Heart left ventricle (tissue), 16 donors: ENCODE measurements at regions of chr17 and their contacts with region 1.

Region 1: GRCh38 chr17:49646391-49647255 is 31.3 kb downstream of the SPOP start:
- DNase-seq: no peak
- ATAC-seq: peak; percentile 48 to 77 (median 62)
- H3K4me3 ChIP-seq: no peak overlapping the region
- H3K27ac ChIP-seq: peak overlapping the region; percentile 50 to 91 (median 73)
- H3K4me1 ChIP-seq: peaks cover 0 to 73% (median 45%) of the 10 kb centered on the region in 12 donors
- H3K27me3 ChIP-seq: no peaks in the 10 kb centered on the region
- CTCF ChIP-seq: no peak
- POLR2A ChIP-seq: no peak

Region 2: GRCh38 chr17:49603720-49604119 is 42.9 kb before region 1 on chr17:
- intact Hi-C with region 1: loop called in 1 of 10 experiments (anchors 5 kb)
- DNase-seq: no peak
- ATAC-seq: peak in 1 of 4 donors; percentile 33
- H3K4me3 ChIP-seq: no peak overlapping the region
- H3K27ac ChIP-seq: peak overlapping the region in 7 of 12 donors; percentile 12 to 72 (median 36)
- H3K4me1 ChIP-seq: peaks cover 0 to 32% (median 18%) of the 10 kb centered on the region in 12 donors
- H3K27me3 ChIP-seq: no peaks in the 10 kb centered on the region
- CTCF ChIP-seq: peak in 4 of 12 donors; percentile 14 to 29 (median 22)
- POLR2A ChIP-seq: no peak